ENCODE measurements at regions of chr10 and their contacts with region 1.

Region 1: GRCh38 chr10:50624866-50625692 is 1.3 kb upstream of the SGMS1 start:
- DNase-seq: peak; percentile 32 to 87 (median 67)
- ATAC-seq: peak; percentile 32
- H3K4me3 ChIP-seq: peak overlapping the region; percentile 95 to 97
- H3K4me3 Mint-ChIP-seq: peak overlapping the region; percentile 97
- H3K27ac ChIP-seq: peak overlapping the region; percentile 99 to 100
- H3K27ac Mint-ChIP-seq: peak overlapping the region; percentile 96
- H3K4me1 ChIP-seq: peaks cover 23% of the 10 kb centered on the region
- H3K4me1 Mint-ChIP-seq: peaks cover 28% of the 10 kb centered on the region
- H3K27me3 ChIP-seq: no peaks in the 10 kb centered on the region
- H3K27me3 Mint-ChIP-seq: no peaks in the 10 kb centered on the region
- CTCF ChIP-seq: peak; percentile 57

Region 2: GRCh38 chr10:50063100-50063499 is 562.0 kb before region 1 on chr10:
- CTCF ChIA-PET with region 1: no interaction called
- POLR2A ChIA-PET with region 1: no interaction called
- intact Hi-C with region 1: loop called in 1 of 2 experiments (anchors 1 kb)
- DNase-seq: no peak
- ATAC-seq: no peak
- H3K4me3 ChIP-seq: no peak overlapping the region
- H3K4me3 Mint-ChIP-seq: no peak overlapping the region
- H3K27ac ChIP-seq: no peak overlapping the region
- H3K27ac Mint-ChIP-seq: no peak overlapping the region
- H3K4me1 ChIP-seq: peaks cover 4% of the 10 kb centered on the region
- H3K4me1 Mint-ChIP-seq: peaks cover 3% of the 10 kb centered on the region
- H3K27me3 ChIP-seq: no peaks in the 10 kb centered on the region
- H3K27me3 Mint-ChIP-seq: no peaks in the 10 kb centered on the region
- CTCF ChIP-seq: no peak

Region 3: GRCh38 chr10:50522908-50523307 is 102.2 kb before region 1 on chr10:
- CTCF ChIA-PET with region 1: no interaction called
- POLR2A ChIA-PET with region 1: interaction called, 7 read pairs
- intact Hi-C with region 1: loop called in 1 of 2 experiments (anchors 5 kb)
- DNase-seq: peak in 2 of 9 experiments; percentile 23 to 27
- ATAC-seq: peak; percentile 56
- H3K4me3 ChIP-seq: no peak overlapping the region
- H3K4me3 Mint-ChIP-seq: peak overlapping the region; percentile 30
- H3K27ac ChIP-seq: no peak overlapping the region
- H3K27ac Mint-ChIP-seq: peak overlapping the region; percentile 79
- H3K4me1 ChIP-seq: peaks cover 13% of the 10 kb centered on the region
- H3K4me1 Mint-ChIP-seq: peaks cover 49% of the 10 kb centered on the region
- H3K27me3 ChIP-seq: no peaks in the 10 kb centered on the region
- H3K27me3 Mint-ChIP-seq: no peaks in the 10 kb centered on the region
- CTCF ChIP-seq: no peak

Region 4: GRCh38 chr10:50577681-50578350 is 47.3 kb before region 1 on chr10:
- CTCF ChIA-PET with region 1: no interaction called
- POLR2A ChIA-PET with region 1: no interaction called
- intact Hi-C with region 1: loop called in 1 of 2 experiments (anchors 5 kb)
- DNase-seq: no peak
- ATAC-seq: no peak
- H3K4me3 ChIP-seq: no peak overlapping the region
- H3K4me3 Mint-ChIP-seq: no peak overlapping the region
- H3K27ac ChIP-seq: no peak overlapping the region
- H3K27ac Mint-ChIP-seq: no peak overlapping the region
- H3K4me1 ChIP-seq: no peaks in the 10 kb centered on the region
- H3K4me1 Mint-ChIP-seq: peaks cover 74% of the 10 kb centered on the region
- H3K27me3 ChIP-seq: no peaks in the 10 kb centered on the region
- H3K27me3 Mint-ChIP-seq: no peaks in the 10 kb centered on the region
- CTCF ChIP-seq: no peak

Region 5: DNA sequence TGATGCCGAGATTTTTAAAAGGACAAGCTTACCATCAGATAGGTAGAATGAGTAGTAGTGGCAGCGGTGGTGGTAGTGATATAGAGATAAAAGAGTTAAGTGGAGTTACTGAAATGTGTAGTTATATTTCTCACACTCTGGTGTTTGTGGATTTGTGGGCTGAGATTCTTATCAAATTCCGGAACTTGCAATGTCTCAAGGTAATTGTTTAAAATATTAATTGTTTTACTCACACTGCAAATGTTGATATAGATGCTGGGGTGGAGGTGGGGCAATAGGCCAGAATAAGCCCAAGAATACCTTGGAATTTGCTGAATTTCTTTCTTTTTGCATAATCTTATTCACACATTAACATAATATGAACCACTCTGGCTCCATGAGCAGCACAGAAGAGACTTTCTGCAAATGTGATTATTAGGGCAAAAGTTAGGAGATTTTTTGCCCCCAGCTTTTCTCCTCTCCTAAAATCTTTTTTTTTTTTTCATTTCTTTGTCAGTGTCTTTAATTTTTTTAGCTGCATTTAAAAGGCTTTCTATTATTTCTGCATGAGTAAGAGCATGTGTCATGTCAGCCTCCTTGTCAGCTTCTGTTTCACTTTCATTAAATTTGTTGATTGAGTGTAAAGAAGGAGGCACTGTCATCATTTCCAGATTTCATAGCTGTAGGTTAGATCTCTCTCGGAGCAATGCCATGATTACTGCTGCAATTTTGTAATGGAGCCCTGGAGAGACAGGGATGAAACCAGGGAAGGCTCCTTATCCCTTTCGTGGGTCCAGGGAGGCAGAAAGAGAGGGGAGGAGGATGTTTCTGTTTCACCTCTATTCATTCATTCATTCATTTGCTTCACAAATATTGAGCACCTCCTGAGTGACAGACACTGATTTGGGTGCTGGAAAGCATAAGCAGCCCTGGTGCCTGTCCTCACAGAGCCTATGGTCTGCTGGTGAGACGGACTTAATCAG is 11.8 kb after region 1 on chr10:
- CTCF ChIA-PET with region 1: interaction called, 3 read pairs
- POLR2A ChIA-PET with region 1: interaction called, 40 read pairs
- intact Hi-C with region 1: no loop called
- DNase-seq: peak in 4 of 9 experiments; percentile 18 to 77 (median 47)
- ATAC-seq: peak; percentile 80
- H3K4me3 ChIP-seq: peak overlapping the region; percentile 13 to 20
- H3K4me3 Mint-ChIP-seq: peak overlapping the region; percentile 62
- H3K27ac ChIP-seq: no peak overlapping the region
- H3K27ac Mint-ChIP-seq: peak overlapping the region; percentile 60
- H3K4me1 ChIP-seq: peaks cover 25% of the 10 kb centered on the region
- H3K4me1 Mint-ChIP-seq: peaks cover 31% of the 10 kb centered on the region
- H3K27me3 ChIP-seq: no peaks in the 10 kb centered on the region
- H3K27me3 Mint-ChIP-seq: peaks cover 2% of the 10 kb centered on the region
- CTCF ChIP-seq: no peak

Region 6: DNA sequence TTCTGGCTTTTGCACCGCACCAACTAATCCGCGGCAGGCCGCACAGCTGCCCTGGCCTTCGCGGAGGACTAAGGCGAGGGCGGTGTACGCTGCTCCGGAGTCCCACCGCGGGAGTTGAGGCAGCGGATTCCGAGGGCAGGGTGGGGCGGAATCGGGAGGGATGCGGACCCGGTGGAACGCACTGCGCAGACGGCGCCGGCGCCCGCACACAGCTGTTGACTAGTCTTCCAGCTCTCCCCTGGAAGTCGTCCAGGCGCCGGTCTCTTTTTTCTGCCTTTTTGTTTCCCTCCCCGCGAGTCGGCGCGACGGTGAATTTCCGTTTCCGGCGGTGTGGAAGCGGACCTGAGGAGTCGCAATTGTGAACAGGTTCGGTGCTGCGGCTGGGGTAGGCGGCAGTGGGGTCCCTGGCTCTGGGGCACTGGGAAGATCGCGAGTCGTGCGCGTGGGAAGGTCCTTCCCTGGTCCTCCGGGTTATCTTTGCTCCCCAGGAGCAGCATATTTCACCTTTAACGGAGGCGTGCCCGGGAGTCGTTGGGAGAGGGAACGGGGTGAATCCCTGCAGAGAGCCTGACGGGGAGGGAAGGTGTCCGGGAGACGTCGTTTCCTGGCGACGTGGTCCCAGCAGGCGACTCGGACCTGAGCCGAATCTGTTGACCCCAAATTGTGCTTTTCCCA is 114.7 kb after region 1 on chr10 and contains the start of gene ASAH2B:
- CTCF ChIA-PET with region 1: no interaction called
- POLR2A ChIA-PET with region 1: no interaction called
- intact Hi-C with region 1: loop called in 1 of 2 experiments (anchors 1 kb)
- DNase-seq: peak; percentile 42 to 86 (median 76)
- ATAC-seq: peak; percentile 74
- H3K4me3 ChIP-seq: peak within 1 kb of the TSS; percentile 63 to 69
- H3K4me3 Mint-ChIP-seq: peak within 1 kb of the TSS; percentile 98
- H3K27ac ChIP-seq: peak within 1 kb of the TSS; percentile 28 to 71
- H3K27ac Mint-ChIP-seq: peak within 1 kb of the TSS; percentile 85
- H3K4me1 ChIP-seq: peaks cover 10% of the 10 kb centered on the region
- H3K4me1 Mint-ChIP-seq: peaks cover 33% of the 10 kb centered on the region
- H3K27me3 ChIP-seq: no peaks in the 10 kb centered on the region
- H3K27me3 Mint-ChIP-seq: peaks cover 4% of the 10 kb centered on the region
- CTCF ChIP-seq: no peak
- total RNA-seq, gene ASAH2B: 0.95 to 1.2 TPM